ENCODE measurements at regions of chr22 and their contacts with region 1.

Region 1: GRCh38 chr22:35785181-35785923 is 67.7 kb downstream of the APOL5 start:
- DNase-seq: no peak
- ATAC-seq: no peak
- H3K4me3 ChIP-seq: no peak overlapping the region
- H3K27ac ChIP-seq: no peak overlapping the region
- H3K4me1 ChIP-seq: no peaks in the 10 kb centered on the region
- H3K27me3 ChIP-seq: no peaks in the 10 kb centered on the region
- CTCF ChIP-seq: no peak

Region 2: GRCh38 chr22:34622602-34623001 is 1162.8 kb before region 1 on chr22:
- CTCF ChIA-PET with region 1: interaction called, 13 read pairs
- POLR2A ChIA-PET with region 1: no interaction called
- in situ Hi-C with region 1: no loop called
- intact Hi-C with region 1: no loop called
- DNase-seq: no peak
- ATAC-seq: no peak
- H3K4me3 ChIP-seq: no peak overlapping the region
- H3K27ac ChIP-seq: no peak overlapping the region
- H3K4me1 ChIP-seq: no peaks in the 10 kb centered on the region
- H3K27me3 ChIP-seq: no peaks in the 10 kb centered on the region
- CTCF ChIP-seq: no peak

Region 3: DNA sequence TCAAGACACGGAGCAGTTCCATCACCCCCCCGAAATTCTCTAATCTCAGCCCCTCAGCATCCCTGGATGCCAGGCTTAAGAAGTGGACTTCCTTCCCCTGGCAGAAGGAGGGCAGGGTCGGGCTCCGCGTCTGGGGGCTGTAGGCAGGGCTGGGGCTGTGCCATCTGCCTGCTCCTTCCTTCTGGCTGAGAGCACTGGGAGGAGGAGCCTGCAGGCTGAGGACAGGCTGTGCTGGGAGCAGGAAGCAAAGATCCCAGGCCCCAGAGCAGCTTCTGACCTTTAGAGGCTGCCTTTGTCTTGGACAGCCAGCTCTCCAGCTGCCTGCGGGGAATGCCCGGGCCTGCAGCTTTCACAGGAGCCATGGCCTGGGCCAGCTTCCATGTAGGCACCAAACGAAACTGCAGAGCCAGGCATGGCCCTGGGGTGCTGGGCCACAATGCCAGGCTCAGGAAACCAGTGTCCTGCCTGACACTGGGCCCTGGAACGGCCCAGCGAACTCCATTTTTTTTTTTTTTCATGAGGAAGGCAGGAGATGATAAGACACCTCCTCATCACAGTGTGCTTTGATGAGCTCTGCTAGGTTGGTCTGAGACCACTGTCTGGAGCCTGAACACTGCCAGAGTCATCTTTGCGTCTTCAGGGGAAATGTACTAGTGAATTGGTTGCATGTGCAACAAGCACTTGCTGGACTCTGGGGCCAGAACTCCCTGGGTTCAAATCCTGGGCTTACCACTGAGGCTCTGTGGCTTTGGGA is 317.5 kb before region 1 on chr22:
- CTCF ChIA-PET with region 1: no interaction called
- POLR2A ChIA-PET with region 1: interaction called, 11 read pairs
- in situ Hi-C with region 1: no loop called
- intact Hi-C with region 1: no loop called
- DNase-seq: no peak
- ATAC-seq: peak; percentile 83
- H3K4me3 ChIP-seq: no peak overlapping the region
- H3K27ac ChIP-seq: peak overlapping the region; percentile 57; the same call in 1 of the 2 replicates
- H3K4me1 ChIP-seq: peaks cover 9% of the 10 kb centered on the region
- H3K27me3 ChIP-seq: no peaks in the 10 kb centered on the region
- CTCF ChIP-seq: no peak

Region 4: DNA sequence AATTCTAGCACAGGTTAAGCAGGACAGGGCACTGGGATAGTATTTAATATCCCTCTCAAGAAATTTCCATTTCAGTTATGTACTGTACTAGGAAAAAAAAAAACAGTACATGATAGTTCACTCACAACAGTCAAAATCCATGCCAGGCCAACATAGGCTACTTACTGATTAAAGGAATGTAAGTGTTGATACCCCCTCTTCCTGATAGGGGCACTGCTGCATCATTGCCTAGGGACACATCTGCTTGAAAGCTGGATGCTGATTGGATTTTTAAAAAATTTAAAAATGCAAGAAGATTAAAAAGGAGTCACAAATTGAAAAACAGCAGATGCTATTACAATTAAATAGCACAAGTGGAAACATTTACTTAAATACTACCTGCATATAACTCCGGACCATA is 24.3 kb before region 1 on chr22:
- CTCF ChIA-PET with region 1: no interaction called
- POLR2A ChIA-PET with region 1: no interaction called
- in situ Hi-C with region 1: no loop called
- intact Hi-C with region 1: no loop called
- DNase-seq: no peak
- ATAC-seq: no peak
- H3K4me3 ChIP-seq: no peak overlapping the region
- H3K27ac ChIP-seq: no peak overlapping the region
- H3K4me1 ChIP-seq: no peaks in the 10 kb centered on the region
- H3K27me3 ChIP-seq: no peaks in the 10 kb centered on the region
- CTCF ChIP-seq: peak; percentile 15; the same call in 1 of the 2 replicates

Region 5: DNA sequence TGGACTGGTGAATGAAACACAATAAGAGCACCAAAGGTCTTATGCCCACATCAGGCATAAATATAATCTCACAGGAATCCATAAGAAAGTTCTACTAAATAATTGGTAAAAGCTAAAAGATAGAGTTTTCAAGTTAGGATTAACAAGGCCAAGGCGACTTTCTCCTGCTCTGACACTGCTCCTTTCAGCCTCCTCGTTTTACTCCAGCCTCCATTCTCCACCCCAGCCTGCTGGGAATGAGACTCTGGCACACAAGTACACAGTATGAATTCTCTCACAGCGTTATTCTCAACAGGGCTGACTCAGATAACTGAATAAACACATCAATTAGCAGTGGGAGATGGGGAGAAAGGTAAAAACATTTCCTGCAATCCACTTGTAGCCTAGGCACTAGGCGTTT is 27.2 kb after region 1 on chr22:
- CTCF ChIA-PET with region 1: no interaction called
- POLR2A ChIA-PET with region 1: interaction called, 12 read pairs
- in situ Hi-C with region 1: no loop called
- intact Hi-C with region 1: no loop called
- DNase-seq: no peak
- ATAC-seq: no peak
- H3K4me3 ChIP-seq: no peak overlapping the region
- H3K27ac ChIP-seq: no peak overlapping the region
- H3K4me1 ChIP-seq: no peaks in the 10 kb centered on the region
- H3K27me3 ChIP-seq: no peaks in the 10 kb centered on the region
- CTCF ChIP-seq: no peak

Region 6: DNA sequence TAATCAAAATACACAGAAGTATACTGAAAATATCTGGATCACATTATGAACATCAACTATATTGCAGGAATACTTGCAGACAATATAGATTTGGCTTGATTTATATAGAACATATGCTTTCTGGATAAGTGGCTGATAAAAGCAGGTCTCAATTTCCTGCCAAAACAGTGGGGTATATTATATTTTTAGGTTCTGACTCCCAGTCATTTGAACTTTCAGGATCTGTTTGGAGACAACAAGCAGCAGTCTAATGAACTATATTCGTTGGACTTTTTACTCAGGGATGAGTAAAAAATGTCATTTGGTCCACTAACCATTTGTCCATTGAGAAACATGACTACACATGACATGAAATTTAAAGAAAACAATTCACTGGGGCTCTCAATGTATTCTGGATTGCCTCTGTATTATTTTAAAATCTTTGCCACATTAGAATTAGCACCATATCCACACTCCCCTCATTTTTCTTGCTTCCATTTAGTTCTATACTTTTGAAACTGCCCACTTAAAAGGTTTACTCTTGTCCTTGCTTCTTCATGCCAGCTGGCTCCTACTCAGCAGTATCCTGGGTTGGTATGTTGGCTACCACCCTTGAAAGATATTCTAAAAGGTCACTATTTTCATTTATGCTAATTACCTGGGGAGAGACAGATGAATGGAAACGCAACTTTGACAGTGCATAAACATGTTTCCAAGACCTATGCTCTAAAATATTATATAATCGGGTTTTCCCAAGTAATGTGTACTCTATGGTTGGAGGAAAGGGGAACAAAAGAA is 85.4 kb after region 1 on chr22:
- CTCF ChIA-PET with region 1: no interaction called
- POLR2A ChIA-PET with region 1: no interaction called
- in situ Hi-C with region 1: no loop called
- intact Hi-C with region 1: no loop called
- DNase-seq: no peak
- ATAC-seq: no peak
- H3K4me3 ChIP-seq: no peak overlapping the region
- H3K27ac ChIP-seq: no peak overlapping the region
- H3K4me1 ChIP-seq: no peaks in the 10 kb centered on the region
- H3K27me3 ChIP-seq: no peaks in the 10 kb centered on the region
- CTCF ChIP-seq: no peak

Measured in Panc1 (cell line).